ENCODE measurements at regions of chr5 and their contacts with region 1.

Region 1: DNA sequence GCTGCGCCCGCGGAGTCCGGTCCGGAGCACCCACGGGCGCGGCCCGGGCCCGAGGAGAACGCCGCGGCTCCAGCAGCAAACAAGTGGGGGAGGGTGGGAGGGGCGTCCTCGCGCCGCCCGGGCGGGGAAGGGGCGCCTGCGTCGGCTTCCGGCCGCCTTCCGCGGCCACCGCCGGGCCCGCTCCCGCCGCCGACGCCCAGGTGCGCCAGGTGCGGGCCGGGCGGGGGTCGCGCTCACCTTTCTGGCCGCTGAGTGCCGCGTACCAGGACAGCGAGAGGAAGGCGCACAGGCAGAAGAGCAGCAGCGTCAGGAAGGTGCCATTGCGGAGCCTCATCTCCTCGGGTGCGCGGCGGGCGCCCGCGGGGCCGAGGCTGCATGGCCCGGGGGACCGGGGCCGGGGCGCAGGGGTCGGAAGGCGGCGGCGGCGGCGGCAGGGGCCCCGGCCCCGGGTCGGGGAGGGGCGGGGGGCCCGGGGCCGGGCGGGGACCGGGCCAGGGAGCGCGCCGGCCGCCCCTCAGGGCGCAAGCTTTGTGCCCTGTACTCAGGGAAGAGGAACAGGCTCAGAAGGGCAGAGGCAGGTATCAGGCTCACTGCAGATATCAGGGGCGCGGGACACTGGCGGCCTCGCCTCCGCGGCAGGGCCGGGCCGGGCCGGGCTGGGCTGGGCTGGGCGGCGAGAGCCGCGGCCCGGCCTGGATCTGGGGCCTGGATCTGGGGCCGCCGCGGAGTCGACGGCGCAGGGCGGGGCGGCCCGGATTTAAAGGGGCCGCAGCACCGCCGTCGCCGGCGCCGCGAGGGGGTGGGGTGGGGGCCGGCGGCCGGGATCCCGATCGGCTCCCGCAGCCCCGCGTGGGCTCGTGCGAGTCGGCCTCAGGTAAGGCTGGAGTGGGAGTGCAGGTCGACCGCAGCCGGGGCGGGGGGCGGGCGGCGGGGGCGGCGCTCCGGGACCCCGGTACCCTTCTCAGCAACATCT is at the start of gene MGAT4B:
- DNase-seq: peak; percentile 74
- ATAC-seq: peak; percentile 70
- H3K4me3 Mint-ChIP-seq: peak within 1 kb of the TSS; percentile 75
- H3K27ac Mint-ChIP-seq: no peak within 1 kb of the TSS
- H3K4me1 Mint-ChIP-seq: peaks cover 36% of the 10 kb centered on the region
- H3K27me3 Mint-ChIP-seq: peaks cover 6% of the 10 kb centered on the region
- CTCF ChIP-seq: no peak
- total RNA-seq, gene MGAT4B: 127 to 151 TPM (median 135 TPM) in 3 replicates

Region 2: GRCh38 chr5:179732417-179732917 is 74.1 kb before region 1 on chr5 and contains the start of gene MAML1:
- CTCF ChIA-PET with region 1: interaction called, 10 read pairs
- POLR2A ChIA-PET with region 1: interaction called, 4 read pairs
- DNase-seq: peak; percentile 100
- ATAC-seq: peak; percentile 95
- H3K4me3 Mint-ChIP-seq: peak within 1 kb of the TSS; percentile 96
- H3K27ac Mint-ChIP-seq: peak within 1 kb of the TSS; percentile 97
- H3K4me1 Mint-ChIP-seq: peaks cover 23% of the 10 kb centered on the region
- H3K27me3 Mint-ChIP-seq: no peaks in the 10 kb centered on the region
- CTCF ChIP-seq: no peak
- total RNA-seq, gene MAML1: 40.5 to 42.2 TPM (median 42.2 TPM) in 3 replicates

Region 3: DNA sequence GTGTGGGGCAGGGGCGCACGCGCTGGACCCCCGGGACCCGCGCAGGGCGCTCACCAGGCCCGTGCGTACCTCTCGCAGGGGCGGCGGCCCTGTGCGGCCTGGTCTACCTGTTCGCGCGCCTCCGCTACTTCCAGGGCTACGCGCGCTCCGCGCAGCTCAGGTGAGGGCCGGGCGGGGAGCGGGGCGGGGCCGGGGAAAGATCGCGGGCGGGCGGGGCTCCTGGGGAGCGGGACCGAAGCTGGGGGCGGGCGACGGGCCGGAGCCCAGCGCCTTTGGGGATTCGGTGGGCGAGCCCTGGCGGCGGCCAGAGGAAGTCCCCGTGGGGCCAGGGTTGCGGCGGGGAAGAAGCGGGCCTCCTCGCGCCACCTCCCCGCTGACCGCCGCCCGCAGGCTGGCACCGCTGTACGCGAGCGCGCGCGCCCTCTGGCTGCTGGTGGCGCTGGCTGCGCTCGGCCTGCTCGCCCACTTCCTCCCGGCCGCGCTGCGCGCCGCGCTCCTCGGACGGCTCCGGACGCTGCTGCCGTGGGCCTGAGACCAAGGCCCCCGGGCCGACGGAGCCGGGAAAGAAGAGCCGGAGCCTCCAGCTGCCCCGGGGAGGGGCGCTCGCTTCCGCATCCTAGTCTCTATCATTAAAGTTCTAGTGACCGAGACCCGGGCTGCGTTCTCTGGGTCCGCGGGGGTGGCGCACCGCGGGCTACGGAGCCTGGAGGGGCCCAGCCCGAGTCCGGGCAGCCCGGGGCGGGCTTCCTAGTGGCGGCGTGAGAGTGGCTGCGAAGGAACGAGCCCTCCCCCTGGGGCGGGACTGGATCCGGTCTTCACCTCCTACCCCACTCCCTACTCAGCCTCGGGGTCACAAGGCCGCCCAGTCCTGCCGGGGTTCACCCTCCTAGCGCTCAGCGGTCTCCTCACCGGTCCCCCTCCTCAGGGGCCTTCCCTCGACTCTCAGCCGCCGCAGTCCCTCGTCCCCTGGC is 10.4 kb before region 1 on chr5:
- CTCF ChIA-PET with region 1: interaction called, 20 read pairs
- POLR2A ChIA-PET with region 1: interaction called, 10 read pairs
- DNase-seq: peak; percentile 84
- ATAC-seq: peak; percentile 61
- H3K4me3 Mint-ChIP-seq: peak overlapping the region; percentile 67
- H3K27ac Mint-ChIP-seq: peak overlapping the region; percentile 90; the same call in 1 of the 2 replicates
- H3K4me1 Mint-ChIP-seq: peaks cover 18% of the 10 kb centered on the region
- H3K27me3 Mint-ChIP-seq: no peaks in the 10 kb centered on the region
- CTCF ChIP-seq: peak; percentile 22; the same call in 1 of the 2 replicates

Region 4: GRCh38 chr5:179827680-179828079 is 21.1 kb after region 1 on chr5:
- CTCF ChIA-PET with region 1: interaction called, 16 read pairs
- POLR2A ChIA-PET with region 1: no interaction called
- DNase-seq: no peak
- ATAC-seq: peak; percentile 58
- H3K4me3 Mint-ChIP-seq: no peak overlapping the region
- H3K27ac Mint-ChIP-seq: peak overlapping the region; percentile 42
- H3K4me1 Mint-ChIP-seq: peaks cover 30% of the 10 kb centered on the region
- H3K27me3 Mint-ChIP-seq: no peaks in the 10 kb centered on the region
- CTCF ChIP-seq: no peak

Region 5: DNA sequence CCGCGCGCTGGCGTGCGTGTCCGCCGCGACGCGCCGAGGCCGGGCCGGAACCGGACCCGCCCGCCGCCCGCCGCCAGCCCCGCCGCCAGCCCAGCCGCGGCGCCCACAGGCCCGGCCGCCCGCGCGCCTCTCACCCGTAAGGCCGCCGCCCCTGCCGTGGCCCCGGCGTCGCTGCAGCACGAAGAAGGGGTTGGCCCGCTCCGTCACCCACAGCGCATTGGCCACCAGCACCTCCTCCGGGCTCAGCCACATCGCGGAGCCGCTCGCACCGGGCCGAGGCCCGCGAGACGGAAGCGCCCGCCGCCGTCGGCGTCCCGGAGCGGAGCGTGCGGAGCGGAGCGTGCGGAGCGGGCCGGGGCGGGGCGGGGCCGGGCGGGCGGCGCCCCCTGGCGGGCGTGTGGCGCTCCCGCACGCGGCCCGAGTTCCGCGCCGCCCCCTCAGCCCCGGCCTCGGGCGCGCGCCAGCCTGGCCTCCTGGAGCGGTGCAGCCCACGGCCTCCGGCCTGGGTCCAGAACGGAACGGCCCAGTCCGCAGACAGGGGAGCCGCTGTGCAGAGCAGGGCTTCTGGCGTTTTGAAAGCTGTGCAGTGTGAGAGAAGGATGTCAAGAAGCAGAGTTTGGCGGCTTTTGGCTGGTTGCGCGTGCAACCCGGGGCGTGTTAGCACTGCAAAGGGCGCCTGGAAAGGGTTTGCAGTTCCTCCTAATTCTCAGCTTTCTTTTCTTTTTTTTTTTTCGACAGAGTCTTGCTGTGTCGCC is 101.2 kb after region 1 on chr5 and contains the start of gene TBC1D9B:
- CTCF ChIA-PET with region 1: interaction called, 19 read pairs
- POLR2A ChIA-PET with region 1: no interaction called
- DNase-seq: peak; percentile 60
- ATAC-seq: peak; percentile 68
- H3K4me3 Mint-ChIP-seq: peak within 1 kb of the TSS; percentile 81
- H3K27ac Mint-ChIP-seq: no peak within 1 kb of the TSS
- H3K4me1 Mint-ChIP-seq: peaks cover 3% of the 10 kb centered on the region; the same call in 1 of the 2 replicates
- H3K27me3 Mint-ChIP-seq: peaks cover under 1% of the 10 kb centered on the region; the same call in 1 of the 2 replicates
- CTCF ChIP-seq: peak; percentile 41; the same call in 1 of the 2 replicates
- total RNA-seq, gene TBC1D9B: 64.9 to 70.9 TPM (median 69.0 TPM) in 3 replicates

Region 6: GRCh38 chr5:180117000-180117725 is 310.6 kb after region 1 on chr5:
- CTCF ChIA-PET with region 1: no interaction called
- POLR2A ChIA-PET with region 1: no interaction called
- DNase-seq: no peak
- ATAC-seq: peak; percentile 59
- H3K4me3 Mint-ChIP-seq: no peak overlapping the region
- H3K27ac Mint-ChIP-seq: no peak overlapping the region
- H3K4me1 Mint-ChIP-seq: no peaks in the 10 kb centered on the region
- H3K27me3 Mint-ChIP-seq: no peaks in the 10 kb centered on the region
- CTCF ChIP-seq: no peak

Measured in WTC11 (cell line).